ENCODE measurements at regions of chr6 and their contacts with region 1.

Region 1: GRCh38 chr6:159789377-159790148 is at the start of gene TCP1:
- DNase-seq: peak; percentile 95
- CTCF ChIP-seq: no peak

Region 2: DNA sequence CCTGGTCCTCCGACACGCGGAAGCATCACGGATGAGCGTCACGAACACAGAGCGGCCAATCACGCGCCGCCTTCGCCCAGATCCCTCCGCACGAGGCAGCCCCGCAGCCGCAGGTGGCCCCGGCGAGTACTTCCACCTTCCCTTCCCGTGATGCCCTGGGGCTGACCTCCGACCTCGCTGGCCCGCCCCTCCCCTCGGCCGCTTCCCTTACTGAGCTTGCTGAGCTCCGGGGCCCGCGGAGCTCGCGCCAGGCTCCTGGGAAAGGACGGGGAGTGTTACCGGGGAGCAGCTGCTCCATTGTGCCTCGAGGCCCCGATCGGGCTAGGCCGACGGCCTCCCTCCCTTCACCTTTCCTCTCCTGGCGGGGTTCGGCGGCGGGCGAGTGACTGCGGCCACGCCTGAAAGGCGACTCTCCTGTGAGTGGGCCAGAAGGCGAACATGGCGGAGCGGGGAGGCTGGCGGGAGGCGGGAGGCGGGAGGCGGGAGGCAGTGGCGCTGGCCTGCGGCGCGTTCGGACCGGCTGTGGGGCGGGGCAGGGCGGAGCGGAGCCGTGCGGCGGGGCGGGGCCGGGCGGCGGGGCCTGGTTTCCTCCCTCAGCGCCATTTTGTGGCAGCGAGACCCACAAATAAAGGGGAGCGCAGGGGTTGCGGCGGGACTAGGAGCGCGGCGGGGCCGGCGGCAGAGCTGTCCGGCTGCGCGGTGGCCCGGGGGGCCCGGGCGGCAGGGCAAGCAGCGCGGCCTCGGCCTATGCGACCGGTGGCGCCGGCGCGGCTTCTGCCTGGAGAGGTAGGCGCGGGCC is 62.4 kb before region 1 on chr6 and contains the start of gene WTAP:
- CTCF ChIA-PET with region 1: interaction called, 5 read pairs
- POLR2A ChIA-PET with region 1: interaction called, 14 read pairs
- DNase-seq: peak; percentile 95
- CTCF ChIP-seq: no peak

Region 3: GRCh38 chr6:159801935-159802334 is 12.4 kb after region 1 on chr6:
- CTCF ChIA-PET with region 1: interaction called, 16 read pairs
- POLR2A ChIA-PET with region 1: interaction called, 4 read pairs
- DNase-seq: no peak
- CTCF ChIP-seq: no peak

Region 4: DNA sequence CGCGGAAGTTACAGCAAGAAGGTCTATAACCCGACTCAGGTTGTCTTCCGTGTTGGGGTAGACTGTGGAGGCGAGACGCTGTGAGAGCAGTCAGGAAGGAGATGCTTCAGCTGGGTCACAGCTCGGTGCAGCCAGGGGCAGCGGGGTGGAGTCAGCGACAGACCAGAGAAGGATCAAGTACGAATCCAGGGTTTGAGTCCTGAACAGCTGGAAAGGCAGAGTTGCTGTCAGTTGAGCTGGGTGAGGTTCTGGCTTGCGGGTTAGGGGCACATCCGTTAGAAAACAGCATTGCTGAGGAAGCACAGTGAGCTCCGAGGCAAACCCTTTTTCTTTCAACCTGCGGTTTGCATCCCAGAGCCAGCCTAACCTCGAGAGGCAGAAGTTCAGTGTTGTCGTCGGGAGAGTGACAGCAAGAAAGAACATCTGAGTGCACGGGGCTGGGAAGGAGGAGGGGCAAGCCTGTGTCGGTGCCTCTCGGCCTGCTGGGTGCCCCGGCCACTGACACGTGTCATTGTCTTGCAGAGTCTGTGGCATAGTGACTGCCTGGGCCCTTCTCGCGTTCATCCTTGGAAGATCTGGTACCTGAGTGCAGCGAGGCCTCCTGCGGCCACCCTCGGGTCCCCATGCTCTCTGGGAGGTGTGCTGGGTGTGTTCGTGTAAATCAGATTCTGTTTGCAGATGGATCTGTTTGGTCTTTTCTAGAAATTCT is 30.5 kb after region 1 on chr6:
- CTCF ChIA-PET with region 1: no interaction called
- POLR2A ChIA-PET with region 1: no interaction called
- DNase-seq: peak; percentile 48
- CTCF ChIP-seq: no peak

Region 5: DNA sequence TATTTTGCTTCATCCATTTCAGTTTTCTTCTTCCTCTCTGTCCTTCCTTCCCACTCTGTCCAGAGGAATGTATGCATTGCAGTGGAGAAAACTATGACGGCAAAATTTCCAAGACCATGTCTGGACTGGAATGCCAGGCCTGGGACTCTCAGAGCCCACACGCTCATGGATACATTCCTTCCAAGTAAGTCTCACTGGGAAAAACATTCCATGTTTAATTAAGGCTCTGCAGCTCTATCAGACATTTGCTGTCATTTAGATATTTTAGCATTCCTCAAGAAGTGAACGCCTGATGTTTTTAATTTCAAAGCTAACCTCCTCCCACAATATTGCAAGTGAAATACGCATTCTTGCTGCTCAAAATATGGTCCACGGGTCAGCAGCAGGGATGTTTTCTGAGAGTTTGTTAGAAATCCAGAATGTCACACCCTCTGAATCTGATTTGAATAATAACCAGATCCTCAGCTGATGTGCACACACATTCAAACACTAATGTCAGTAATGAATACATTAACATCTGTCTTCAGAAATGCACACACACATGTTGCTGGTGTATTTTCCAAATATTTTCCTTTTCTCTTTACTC is 925.3 kb after region 1 on chr6:
- CTCF ChIA-PET with region 1: no interaction called
- POLR2A ChIA-PET with region 1: no interaction called
- DNase-seq: no peak
- CTCF ChIP-seq: no peak